Posterior cingulate gyrus (tissue), 11 donors: ENCODE measurements at regions of chr3 and their contacts with region 1.

Region 1: GRCh38 chr3:28348629-28349483 is at the starts of genes AZI2 and ZCWPW2:
- DNase-seq: peak; percentile 85 to 99 (median 90)

Region 2: DNA sequence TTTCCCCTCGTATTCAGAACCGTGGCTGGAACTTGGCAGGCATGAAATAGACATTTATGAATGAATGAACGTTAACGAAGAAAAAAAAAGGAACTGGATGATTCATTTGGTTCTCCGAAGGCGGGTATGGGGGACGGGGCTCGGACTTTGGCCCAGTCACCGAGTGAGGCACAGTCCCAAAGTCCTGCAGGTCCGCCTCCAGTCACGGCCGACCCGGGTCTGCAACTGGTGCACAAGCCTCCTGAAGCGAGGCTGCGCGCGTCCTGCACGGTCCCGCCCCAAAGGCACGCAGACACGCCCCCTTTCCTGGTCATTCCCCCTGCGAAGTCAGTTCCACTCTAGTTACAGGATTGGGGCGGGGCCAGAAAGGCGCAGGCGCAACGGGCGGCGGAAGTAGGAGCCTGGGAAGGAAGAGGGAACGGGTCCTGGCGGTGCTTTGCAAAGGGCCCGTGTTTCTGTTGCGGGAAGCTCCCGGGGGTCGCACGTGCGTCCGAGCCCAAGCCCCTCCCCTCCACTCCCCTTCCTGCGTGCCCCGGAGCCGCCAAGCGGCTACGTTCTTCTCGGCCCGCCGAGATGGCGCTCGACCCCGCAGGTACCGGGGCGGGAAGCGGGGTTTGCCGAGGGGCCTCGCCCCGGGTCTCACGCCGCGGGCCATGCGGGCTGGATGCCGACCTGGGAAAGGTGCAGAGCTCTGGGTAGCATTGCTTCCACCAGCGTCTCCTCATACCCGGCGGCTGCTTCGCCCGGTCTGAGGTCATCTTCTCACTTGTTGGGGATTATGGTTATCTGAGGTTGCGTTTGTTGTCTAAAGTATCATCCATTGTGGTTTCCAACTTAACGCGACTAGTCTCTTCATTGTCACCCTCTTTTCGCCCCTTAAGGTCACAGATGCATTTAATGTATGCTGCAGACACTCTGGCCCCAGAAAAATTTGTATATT is 107.4 kb before region 1 on chr3 and contains the start of gene CMC1:
- intact Hi-C with region 1: loop called (anchors 5 kb)
- DNase-seq: peak; percentile 95 to 100 (median 98)